ENCODE measurements at regions of chr7 and their contacts with region 1.

Region 1: DNA sequence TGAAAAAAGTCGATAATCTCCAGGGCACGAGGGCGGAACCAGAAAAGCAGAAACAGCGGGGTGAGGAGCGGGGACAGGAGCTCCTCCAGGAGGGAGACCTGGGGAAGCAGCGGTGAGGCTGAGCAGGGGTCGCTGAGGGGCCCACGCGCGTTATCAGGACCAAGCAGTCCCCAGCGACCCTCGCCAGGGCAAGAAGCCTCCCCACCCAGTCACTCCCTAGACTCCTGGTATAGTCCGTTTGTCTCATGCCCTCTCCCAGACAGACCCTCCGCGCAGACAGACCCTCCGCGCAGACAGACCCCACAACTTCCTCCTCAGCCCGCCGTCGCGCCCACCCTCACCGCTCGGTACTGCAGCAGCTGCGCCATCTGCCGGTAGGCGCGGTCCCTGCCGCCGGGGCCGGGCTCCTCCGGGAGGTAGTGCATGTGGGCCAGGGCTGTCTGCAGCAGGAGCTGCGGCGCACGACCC is 6.3 kb downstream of the ATG9B start:
- DNase-seq: peak; percentile 50 to 83 (median 76)
- H3K4me3 ChIP-seq: no peak overlapping the region
- H3K27ac ChIP-seq: no peak overlapping the region
- H3K4me1 ChIP-seq: peaks cover 6% of the 10 kb centered on the region
- H3K27me3 ChIP-seq: no peaks in the 10 kb centered on the region
- CTCF ChIP-seq: peak; percentile 61 to 83 (median 79)
- EP300 ChIP-seq: no peak
- POLR2A ChIP-seq: no peak

Region 2: DNA sequence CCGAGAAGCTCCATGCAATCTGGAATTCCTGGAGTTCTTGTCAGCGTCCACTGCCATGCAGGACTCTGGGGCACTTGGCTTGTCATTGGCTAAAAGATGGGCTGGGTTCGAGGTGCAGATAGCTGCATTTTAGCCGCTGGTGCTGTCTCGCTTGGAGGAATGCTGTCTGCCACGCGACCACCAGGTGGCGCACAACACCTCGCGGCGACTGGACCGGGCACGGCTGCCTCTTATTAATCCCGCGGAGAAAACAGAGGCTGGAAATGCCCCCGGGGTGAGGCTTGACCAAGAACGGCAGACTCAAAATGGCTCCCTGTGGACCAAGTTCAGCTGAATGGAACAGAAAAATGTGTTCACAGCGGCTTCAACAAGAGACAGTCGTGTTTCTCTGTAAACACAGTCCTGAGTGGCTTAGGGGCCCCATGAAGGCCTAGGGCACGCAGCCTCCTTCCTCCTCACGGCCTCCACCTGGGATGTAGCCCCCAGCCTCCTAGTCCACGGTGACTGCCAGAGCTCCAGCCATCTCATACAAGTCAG is 119.4 kb before region 1 on chr7:
- intact Hi-C with region 1: loop called in 1 of 4 experiments (anchors 5 kb)
- DNase-seq: peak; percentile 68 to 88 (median 80)
- H3K4me3 ChIP-seq: no peak overlapping the region
- H3K27ac ChIP-seq: no peak overlapping the region
- H3K4me1 ChIP-seq: no peaks in the 10 kb centered on the region
- H3K27me3 ChIP-seq: no peaks in the 10 kb centered on the region
- CTCF ChIP-seq: peak; percentile 85 to 91 (median 90)
- EP300 ChIP-seq: no peak
- POLR2A ChIP-seq: no peak

Region 3: DNA sequence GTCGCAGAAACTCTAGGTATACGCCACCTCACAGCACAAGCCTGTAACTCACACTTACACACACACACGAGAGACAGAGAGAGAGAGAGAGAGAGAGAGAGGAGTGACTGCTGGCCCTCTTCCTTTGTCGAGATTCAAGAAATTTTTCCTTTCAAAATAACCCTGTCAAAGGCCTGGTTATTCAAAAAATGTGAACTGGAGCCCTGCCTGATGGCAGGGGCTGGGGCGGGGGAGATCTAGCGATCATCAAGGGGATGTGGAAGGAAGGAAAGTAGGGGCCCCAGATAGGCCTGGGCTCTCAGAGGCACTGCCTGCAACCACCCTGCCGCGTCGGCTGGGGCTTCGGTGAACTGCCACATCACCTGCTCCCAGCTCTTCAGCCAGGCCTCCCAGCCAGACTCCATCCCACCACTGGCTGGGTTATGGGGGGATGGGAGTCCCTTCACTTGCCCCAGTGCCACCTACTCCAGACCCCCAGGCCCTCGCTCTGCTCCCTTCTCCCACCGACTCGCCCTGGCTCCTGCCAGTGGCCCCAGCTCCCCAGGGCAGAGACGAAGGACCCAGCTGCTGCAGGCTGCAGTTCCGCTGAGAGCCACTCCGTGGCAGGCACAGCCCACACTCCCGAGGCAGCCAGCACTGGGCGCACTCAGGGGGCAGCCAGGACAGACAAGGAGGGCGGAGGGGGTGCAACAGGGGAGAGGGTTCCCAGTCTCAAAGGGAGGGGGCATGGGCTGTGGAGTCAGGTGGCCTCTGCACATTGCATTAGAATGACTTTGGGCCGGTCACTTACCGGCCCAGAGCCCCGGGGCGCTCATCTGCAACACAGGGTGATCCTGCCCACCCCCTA is 55.2 kb before region 1 on chr7:
- intact Hi-C with region 1: loop called in 1 of 4 experiments (anchors 5 kb)
- DNase-seq: peak; percentile 57 to 79 (median 70)
- H3K4me3 ChIP-seq: no peak overlapping the region
- H3K27ac ChIP-seq: peak overlapping the region in 1 of 2 donors; percentile 16
- H3K4me1 ChIP-seq: peaks cover 13% of the 10 kb centered on the region
- H3K27me3 ChIP-seq: no peaks in the 10 kb centered on the region
- CTCF ChIP-seq: peak; percentile 81 to 89 (median 83)
- EP300 ChIP-seq: no peak
- POLR2A ChIP-seq: no peak

Measured in ovary (tissue), 10 donors.